CD4-positive, alpha-beta T cell (primary cell): ENCODE measurements at regions of chr1 and their contacts with region 1.

Region 1: GRCh38 chr1:185393815-185394214 is 76.8 kb upstream of the IVNS1ABP start:
- DNase-seq: no peak
- ATAC-seq: no peak
- H3K4me3 ChIP-seq: no peak overlapping the region
- H3K4me3 Mint-ChIP-seq: no peak overlapping the region
- H3K27ac ChIP-seq: no peak overlapping the region
- H3K27ac Mint-ChIP-seq: no peak overlapping the region
- H3K4me1 ChIP-seq: no peaks in the 10 kb centered on the region
- H3K4me1 Mint-ChIP-seq: no peaks in the 10 kb centered on the region
- H3K27me3 ChIP-seq: no peaks in the 10 kb centered on the region
- H3K27me3 Mint-ChIP-seq: no peaks in the 10 kb centered on the region
- CTCF ChIP-seq: no peak

Region 2: GRCh38 chr1:185345913-185346720 is 47.7 kb before region 1 on chr1:
- CTCF ChIA-PET with region 1: no interaction called
- POLR2A ChIA-PET with region 1: no interaction called
- intact Hi-C with region 1: loop called in 1 of 2 experiments (anchors 5 kb)
- DNase-seq: peak in 2 of 14 experiments; percentile 17 to 19
- ATAC-seq: no peak
- H3K4me3 ChIP-seq: no peak overlapping the region
- H3K4me3 Mint-ChIP-seq: no peak overlapping the region
- H3K27ac ChIP-seq: no peak overlapping the region
- H3K27ac Mint-ChIP-seq: no peak overlapping the region
- H3K4me1 ChIP-seq: peaks cover 5% of the 10 kb centered on the region
- H3K4me1 Mint-ChIP-seq: peaks cover 36% of the 10 kb centered on the region
- H3K27me3 ChIP-seq: no peaks in the 10 kb centered on the region
- H3K27me3 Mint-ChIP-seq: no peaks in the 10 kb centered on the region
- CTCF ChIP-seq: no peak

Region 3: DNA sequence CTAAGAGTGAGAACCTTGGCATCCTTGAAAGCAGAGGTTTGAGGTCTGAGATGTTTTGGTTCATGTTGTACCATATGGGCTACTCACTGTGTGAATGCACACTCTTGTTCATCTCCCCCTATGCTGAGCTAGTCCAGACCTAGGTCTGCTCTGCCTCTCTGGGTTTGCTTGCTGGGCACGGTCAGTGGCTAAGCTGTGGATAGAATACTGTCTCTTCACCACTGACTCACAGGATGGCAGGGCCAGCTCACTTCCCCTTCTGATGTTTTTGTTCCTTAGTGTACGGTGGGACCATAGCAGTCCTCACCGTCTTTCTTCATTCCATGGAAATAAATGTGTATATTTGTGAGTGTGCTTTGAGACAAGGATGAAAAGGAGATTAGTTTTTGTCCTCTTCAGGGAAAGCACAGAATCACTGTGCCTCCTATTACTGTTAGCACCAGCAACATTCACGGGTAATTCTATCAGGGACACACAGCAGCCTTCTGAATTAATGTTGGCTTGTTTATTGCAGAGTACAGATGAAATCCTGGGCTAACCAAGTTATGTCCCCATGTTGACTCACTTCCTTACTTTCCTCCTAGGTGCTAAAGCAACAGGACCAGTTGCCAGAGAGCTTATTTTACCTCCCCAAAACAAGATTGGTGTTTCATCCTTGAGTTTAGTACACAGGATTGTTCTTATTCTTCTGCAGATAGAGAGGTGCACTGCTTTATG is 19.8 kb before region 1 on chr1:
- CTCF ChIA-PET with region 1: no interaction called
- POLR2A ChIA-PET with region 1: no interaction called
- intact Hi-C with region 1: no loop called
- DNase-seq: peak in 2 of 14 experiments; percentile 50 to 60
- ATAC-seq: no peak
- H3K4me3 ChIP-seq: no peak overlapping the region
- H3K4me3 Mint-ChIP-seq: no peak overlapping the region
- H3K27ac ChIP-seq: no peak overlapping the region
- H3K27ac Mint-ChIP-seq: no peak overlapping the region
- H3K4me1 ChIP-seq: peaks cover 5% of the 10 kb centered on the region
- H3K4me1 Mint-ChIP-seq: peaks cover 16% of the 10 kb centered on the region
- H3K27me3 ChIP-seq: no peaks in the 10 kb centered on the region
- H3K27me3 Mint-ChIP-seq: no peaks in the 10 kb centered on the region
- CTCF ChIP-seq: no peak